GM23248 (cell line): ENCODE measurements at regions of chr15 and their contacts with region 1.

Region 1: GRCh38 chr15:32844118-32844711 is 126.4 kb downstream of the GREM1 start:
- DNase-seq: peak; percentile 63
- H3K4me3 ChIP-seq: peak overlapping the region; percentile 35; the same call in 1 of the 2 replicates
- H3K27ac ChIP-seq: peak overlapping the region; percentile 97
- H3K4me1 ChIP-seq: peaks cover 49% of the 10 kb centered on the region
- H3K27me3 ChIP-seq: no peaks in the 10 kb centered on the region

Region 2: GRCh38 chr15:32651229-32651837 is 192.9 kb before region 1 on chr15:
- in situ Hi-C with region 1: loop called (anchors 25 kb)
- DNase-seq: peak; percentile 86
- H3K4me3 ChIP-seq: no peak overlapping the region
- H3K27ac ChIP-seq: no peak overlapping the region
- H3K4me1 ChIP-seq: no peaks in the 10 kb centered on the region
- H3K27me3 ChIP-seq: no peaks in the 10 kb centered on the region